ENCODE measurements at regions of chr9 and their contacts with region 1.

Region 1: GRCh38 chr9:76302947-76303940 is 91.0 kb downstream of the RFK start:
- DNase-seq: no peak
- ATAC-seq: peak in 4 of 8 donors; percentile 31 to 67 (median 48)
- H3K4me3 ChIP-seq: no peak overlapping the region
- H3K27ac ChIP-seq: no peak overlapping the region
- H3K4me1 ChIP-seq: peaks cover 0 to 5% (median 0%) of the 10 kb centered on the region in 9 donors
- H3K27me3 ChIP-seq: peaks cover 0 to 12% (median 5%) of the 10 kb centered on the region in 7 donors
- CTCF ChIP-seq: peak; percentile 62 to 80 (median 77)

Region 2: DNA sequence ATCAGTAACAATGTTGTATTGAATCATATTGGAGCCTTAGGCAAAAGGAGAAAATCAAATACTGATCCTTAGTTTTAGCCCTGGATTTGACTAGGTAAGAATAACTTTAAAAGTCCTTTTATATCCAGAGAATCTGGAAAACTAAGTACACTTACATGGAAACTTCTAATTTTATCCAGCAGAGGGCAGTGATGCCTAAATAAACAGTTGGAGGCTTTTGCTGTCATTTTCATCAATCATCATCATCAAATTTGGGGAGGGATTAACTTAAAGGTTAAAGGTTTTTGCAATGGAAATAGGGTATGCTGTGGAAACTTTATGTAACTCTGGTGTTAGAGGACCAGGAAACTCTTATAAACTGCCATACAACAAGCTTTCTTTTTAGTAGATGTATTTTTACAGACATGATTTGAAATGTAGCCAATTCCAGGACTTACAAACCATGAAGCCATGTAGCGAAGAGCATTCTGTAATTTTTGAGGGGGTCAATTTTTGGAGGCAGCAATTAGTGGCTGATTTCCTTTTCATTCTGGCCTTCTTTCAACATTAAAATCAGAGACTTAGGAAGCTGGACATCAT is 1102.3 kb before region 1 on chr9:
- intact Hi-C with region 1: loop called in 6 of 10 experiments (anchors 5 to 10 kb)
- DNase-seq: no peak
- ATAC-seq: no peak
- H3K4me3 ChIP-seq: no peak overlapping the region
- H3K27ac ChIP-seq: no peak overlapping the region
- H3K4me1 ChIP-seq: peaks cover 0 to 8% (median 0%) of the 10 kb centered on the region in 9 donors
- H3K27me3 ChIP-seq: no peaks in the 10 kb centered on the region
- CTCF ChIP-seq: peak; percentile 47 to 75 (median 69)

Region 3: DNA sequence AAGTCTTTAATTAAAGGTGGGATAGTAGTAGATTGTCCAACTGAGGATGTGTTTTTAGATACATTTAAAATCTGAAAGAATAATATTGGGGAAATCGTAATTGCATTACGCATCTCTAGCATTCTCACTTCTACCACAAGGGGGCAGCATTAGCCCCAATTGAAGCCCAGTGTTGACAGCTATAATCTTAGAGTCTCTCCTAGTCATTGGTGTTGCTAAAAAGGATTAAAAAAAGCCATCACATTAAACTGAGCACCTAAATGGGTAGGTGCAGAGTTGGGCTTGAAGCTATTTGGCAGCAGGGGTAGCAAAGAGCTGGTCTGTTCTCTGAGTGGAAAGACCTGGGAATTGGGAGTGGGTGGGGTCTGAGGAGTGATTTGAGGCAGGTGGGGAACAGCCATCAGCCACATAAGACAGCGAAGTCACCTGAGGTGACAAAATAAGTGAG is 1037.7 kb before region 1 on chr9:
- intact Hi-C with region 1: loop called in 5 of 10 experiments (anchors 5 to 10 kb)
- DNase-seq: peak in 1 of 2 donors; percentile 22
- ATAC-seq: peak in 6 of 8 donors; percentile 55 to 79 (median 66)
- H3K4me3 ChIP-seq: no peak overlapping the region
- H3K27ac ChIP-seq: no peak overlapping the region
- H3K4me1 ChIP-seq: no peaks in the 10 kb centered on the region
- H3K27me3 ChIP-seq: no peaks in the 10 kb centered on the region
- CTCF ChIP-seq: peak; percentile 81 to 93 (median 91)

Region 4: GRCh38 chr9:75873712-75874111 is 429.5 kb before region 1 on chr9:
- intact Hi-C with region 1: loop called in 5 of 10 experiments (anchors 10 kb)
- DNase-seq: no peak
- ATAC-seq: no peak
- H3K4me3 ChIP-seq: no peak overlapping the region
- H3K27ac ChIP-seq: no peak overlapping the region
- H3K4me1 ChIP-seq: peaks cover 0 to 15% (median 0%) of the 10 kb centered on the region in 9 donors
- H3K27me3 ChIP-seq: no peaks in the 10 kb centered on the region
- CTCF ChIP-seq: no peak

Region 5: GRCh38 chr9:76180541-76180940 is 122.7 kb before region 1 on chr9:
- intact Hi-C with region 1: no loop called
- DNase-seq: no peak
- ATAC-seq: peak in 1 of 8 donors; percentile 25
- H3K4me3 ChIP-seq: no peak overlapping the region
- H3K27ac ChIP-seq: no peak overlapping the region
- H3K4me1 ChIP-seq: peaks cover 0 to 12% (median 0%) of the 10 kb centered on the region in 9 donors
- H3K27me3 ChIP-seq: no peaks in the 10 kb centered on the region
- CTCF ChIP-seq: no peak

Region 6: GRCh38 chr9:76216161-76216649 is 87.0 kb before region 1 on chr9:
- intact Hi-C with region 1: loop called in 3 of 10 experiments (anchors 5 to 10 kb)
- DNase-seq: no peak
- ATAC-seq: no peak
- H3K4me3 ChIP-seq: no peak overlapping the region
- H3K27ac ChIP-seq: no peak overlapping the region
- H3K4me1 ChIP-seq: peaks cover 0 to 18% (median 0%) of the 10 kb centered on the region in 9 donors
- H3K27me3 ChIP-seq: peaks cover 0 to 59% (median 18%) of the 10 kb centered on the region in 7 donors
- CTCF ChIP-seq: no peak

Region 7: DNA sequence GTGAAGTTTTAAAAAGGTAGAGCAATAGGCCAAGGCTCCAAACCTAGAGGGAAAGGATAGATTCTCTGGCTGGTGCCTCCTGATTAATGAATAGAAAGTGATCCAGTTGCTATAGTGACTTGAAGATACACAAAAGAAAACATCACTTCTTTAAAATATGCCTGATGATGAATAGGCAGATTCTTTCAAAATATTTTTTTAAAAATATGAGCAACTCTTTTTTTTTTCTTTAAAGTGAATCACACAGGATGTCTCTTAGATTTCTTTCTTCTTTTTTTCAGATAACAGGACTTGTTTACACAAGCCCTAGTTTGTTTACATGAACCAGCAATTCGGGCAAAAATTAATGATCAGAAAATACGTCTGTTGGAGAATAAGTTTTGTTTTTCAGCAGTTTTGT is 33.4 kb before region 1 on chr9:
- intact Hi-C with region 1: no loop called
- DNase-seq: no peak
- ATAC-seq: no peak
- H3K4me3 ChIP-seq: no peak overlapping the region
- H3K27ac ChIP-seq: peak overlapping the region in 2 of 10 donors; percentile 3 to 22
- H3K4me1 ChIP-seq: no peaks in the 10 kb centered on the region
- H3K27me3 ChIP-seq: no peaks in the 10 kb centered on the region
- CTCF ChIP-seq: no peak

Measured in heart right ventricle (tissue), 16 donors.